SK-N-SH (cell line): ENCODE measurements at regions of chr20 and their contacts with region 1.

Region 1: DNA sequence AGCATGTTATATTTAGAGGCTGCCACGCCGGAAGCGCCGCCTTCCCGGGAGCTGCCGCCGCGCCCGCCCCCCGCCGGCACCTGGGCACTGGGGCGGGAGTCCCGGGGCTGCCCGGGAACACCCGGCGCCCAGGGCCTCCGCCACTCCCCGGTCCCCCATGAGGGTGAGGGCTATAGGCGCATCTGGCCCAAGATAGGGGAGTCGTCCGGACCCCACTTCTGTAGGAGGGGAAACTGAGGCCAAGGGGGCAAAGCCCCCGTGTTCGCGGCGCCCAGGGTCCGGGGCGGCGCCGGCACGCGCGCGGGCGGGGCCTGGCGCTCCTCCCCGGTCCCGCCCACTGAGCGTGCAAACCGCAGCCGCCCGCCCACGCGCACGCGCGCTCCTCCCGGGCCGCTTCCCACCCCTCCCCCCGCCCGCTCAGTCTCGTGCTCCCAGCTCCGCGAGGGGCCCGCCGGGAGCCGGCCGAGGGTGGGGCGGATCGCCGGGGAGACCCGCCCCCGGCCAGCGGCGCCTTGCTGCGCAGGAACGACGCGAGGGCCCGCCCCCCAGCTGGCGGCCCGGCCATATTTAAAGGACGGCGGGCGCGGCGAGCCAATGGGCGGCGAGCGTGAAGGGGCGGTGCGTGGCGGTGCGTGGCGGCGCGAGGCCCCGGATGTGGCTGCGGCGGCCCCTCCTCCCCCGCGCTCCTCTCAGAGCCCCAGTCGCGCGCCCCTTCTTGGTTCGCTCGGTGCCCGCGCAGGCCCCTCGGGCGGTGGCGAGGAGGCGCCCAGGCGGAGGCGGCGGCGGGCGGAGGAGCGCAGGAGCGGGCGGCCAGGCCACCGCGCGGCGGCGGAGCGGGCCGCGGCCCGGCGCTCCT is at the start of gene LSM14B:
- DNase-seq: peak; percentile 99
- H3K4me3 ChIP-seq: peak within 1 kb of the TSS; percentile 78 to 82
- H3K27ac ChIP-seq: peak within 1 kb of the TSS; percentile 85 to 87
- H3K4me1 ChIP-seq: peaks cover 9 to 28% of the 10 kb centered on the region in 2 experiments; a peak in 3 of 4 replicates
- H3K27me3 ChIP-seq: no peaks in the 10 kb centered on the region
- CTCF ChIP-seq: no peak
- EP300 ChIP-seq: no peak
- RAD21 ChIP-seq: no peak
- polyA plus RNA-seq, gene LSM14B: 52.2 and 64.6 TPM in 2 replicates

Region 2: DNA sequence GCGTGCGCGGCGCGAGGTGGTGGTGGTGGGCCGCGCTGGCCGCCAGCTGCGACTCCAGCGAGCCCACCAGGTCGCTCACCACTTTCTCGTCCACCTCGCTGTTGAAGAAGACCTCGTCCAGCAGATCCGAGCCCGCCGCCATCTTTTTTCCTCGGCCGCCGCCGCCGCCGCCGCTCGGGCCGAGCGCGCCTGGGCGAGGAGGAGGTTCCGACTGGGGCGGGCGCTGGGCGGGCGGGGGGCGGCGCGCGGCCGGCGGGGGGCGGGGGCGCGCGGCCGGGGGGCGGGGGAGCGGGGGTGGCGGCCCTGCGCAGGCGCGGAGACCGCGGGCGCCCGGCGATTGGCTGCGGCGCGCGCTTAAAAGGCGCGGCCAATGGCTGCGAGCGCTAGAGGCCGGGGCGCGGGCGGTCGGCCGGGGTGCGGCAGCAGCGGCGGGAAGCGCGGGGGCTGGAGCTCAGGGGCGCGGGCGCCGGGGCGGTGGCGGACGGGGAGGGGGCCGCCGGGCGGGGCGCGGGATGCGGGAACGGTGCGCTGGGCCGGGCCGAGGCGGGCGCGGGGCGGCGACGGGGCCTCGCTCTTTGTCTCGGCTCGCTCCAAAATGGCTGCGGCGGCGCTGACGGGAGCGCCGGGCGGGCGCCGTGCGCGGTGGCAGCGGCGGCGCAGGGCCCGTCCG is 56.2 kb before region 1 on chr20 and contains the start of gene TAF4:
- CTCF ChIA-PET with region 1: interaction called, 3 read pairs
- POLR2A ChIA-PET with region 1: interaction called, 41 read pairs
- DNase-seq: peak; percentile 100
- H3K4me3 ChIP-seq: peak within 1 kb of the TSS; percentile 70 to 77
- H3K27ac ChIP-seq: peak within 1 kb of the TSS; percentile 58 to 88; a peak in 3 of 4 replicates
- H3K4me1 ChIP-seq: peaks cover 20 to 30% of the 10 kb centered on the region in 2 experiments; a peak in 3 of 4 replicates
- H3K27me3 ChIP-seq: no peaks in the 10 kb centered on the region
- CTCF ChIP-seq: no peak
- EP300 ChIP-seq: peak in 1 of 2 experiments; percentile 15; a peak in 1 of 4 replicates
- RAD21 ChIP-seq: no peak
- polyA plus RNA-seq, gene TAF4: 2.9 and 4.8 TPM in 2 replicates

Region 3: DNA sequence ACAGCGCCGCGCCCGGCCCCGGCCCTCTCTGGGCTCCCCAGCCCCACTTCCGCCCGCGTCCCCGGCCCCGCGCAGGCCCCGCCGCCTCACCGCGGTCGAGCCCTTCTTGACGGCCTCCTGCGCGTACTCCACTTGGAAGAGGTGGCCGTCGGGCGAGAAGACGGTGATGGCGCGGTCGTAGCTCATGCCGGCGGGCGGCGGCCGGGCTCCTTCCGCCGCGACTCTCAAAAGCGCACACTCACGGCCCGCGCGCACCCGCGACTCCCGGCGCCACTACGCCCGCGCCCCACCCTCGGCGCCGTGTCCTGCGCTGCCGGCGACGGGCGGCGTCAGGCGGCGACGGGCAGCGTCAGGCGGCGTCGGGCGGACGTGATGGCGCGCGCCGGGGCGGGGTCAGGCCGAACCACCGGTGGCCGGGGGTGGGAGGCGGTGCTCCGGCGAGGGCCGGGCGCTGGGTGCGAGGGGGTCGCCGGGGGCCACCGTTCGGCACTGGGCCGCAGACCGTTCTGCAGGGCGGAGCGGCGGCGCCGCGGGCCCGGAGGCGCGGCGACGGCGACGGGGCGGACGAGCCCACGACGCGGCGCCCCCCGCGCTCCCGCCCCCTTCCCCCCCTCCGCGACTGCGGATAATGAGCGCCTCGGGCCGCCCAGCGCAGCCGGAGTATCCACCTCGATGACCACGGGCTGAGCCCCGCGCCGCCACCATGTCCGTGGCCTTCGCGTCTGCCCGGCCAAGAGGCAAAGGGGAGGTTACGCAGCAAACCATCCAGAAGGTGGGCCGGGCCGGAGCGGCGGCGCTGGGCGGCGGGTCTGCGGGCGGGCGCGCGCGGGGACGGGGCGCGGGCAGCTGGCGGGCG is 21.3 kb after region 1 on chr20 and contains the starts of genes PSMA7 and SS18L1:
- CTCF ChIA-PET with region 1: interaction called, 18 read pairs
- POLR2A ChIA-PET with region 1: interaction called, 4 read pairs
- DNase-seq: peak; percentile 97
- H3K4me3 ChIP-seq: peak within 1 kb of the TSS; percentile 88 to 92
- H3K27ac ChIP-seq: peak within 1 kb of the TSS; percentile 34 to 96; a peak in 3 of 4 replicates
- H3K4me1 ChIP-seq: peaks cover 5 to 27% of the 10 kb centered on the region in 2 experiments; a peak in 3 of 4 replicates
- H3K27me3 ChIP-seq: no peaks in the 10 kb centered on the region
- CTCF ChIP-seq: no peak
- EP300 ChIP-seq: no peak
- RAD21 ChIP-seq: no peak
- polyA plus RNA-seq, gene PSMA7: 687 and 801 TPM in 2 replicates
- polyA plus RNA-seq, gene SS18L1: 10.7 and 13.1 TPM in 2 replicates

Region 4: DNA sequence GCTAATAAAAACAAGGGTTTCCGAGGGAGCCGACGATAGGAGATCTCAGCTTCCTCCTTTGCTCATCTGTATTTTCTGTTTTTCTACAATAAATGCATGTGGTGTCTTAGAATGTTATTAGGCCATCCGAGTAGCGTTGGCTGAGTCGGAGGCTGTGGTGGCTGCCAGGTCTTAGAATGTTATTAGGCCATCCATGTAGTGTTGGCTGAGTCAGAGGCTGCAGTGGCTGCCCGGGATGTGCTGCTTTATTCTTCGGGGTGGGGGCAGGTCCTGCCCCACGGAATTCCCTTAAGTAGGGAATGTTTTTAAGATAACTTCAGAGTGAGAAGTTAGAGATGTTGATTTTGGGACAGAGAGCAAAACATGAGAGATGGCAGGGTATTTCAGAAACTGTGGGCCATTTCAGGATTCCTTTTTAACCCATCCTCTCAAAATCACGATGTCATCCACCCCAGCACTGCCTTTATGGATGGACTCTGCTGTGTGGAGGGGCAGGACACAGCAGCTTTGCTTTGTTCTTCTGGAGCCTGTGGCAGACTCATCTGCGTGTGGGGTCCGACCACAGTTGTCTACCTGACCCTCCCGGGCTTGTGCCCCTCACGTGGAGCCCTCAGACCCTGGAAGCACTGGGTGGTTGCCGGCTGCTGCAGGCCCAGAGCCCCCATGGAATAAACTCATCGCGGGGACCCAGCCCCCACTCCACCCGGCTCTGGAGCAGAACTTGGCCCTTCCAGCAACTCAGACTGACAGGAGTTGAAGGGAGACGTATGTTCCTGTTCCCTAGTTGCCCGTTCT is 136.7 kb after region 1 on chr20:
- CTCF ChIA-PET with region 1: no interaction called
- POLR2A ChIA-PET with region 1: no interaction called
- DNase-seq: no peak
- H3K4me3 ChIP-seq: no peak overlapping the region
- H3K27ac ChIP-seq: peak overlapping the region in 1 of 2 experiments; percentile 29; a peak in 1 of 4 replicates
- H3K4me1 ChIP-seq: no peaks in the 10 kb centered on the region
- H3K27me3 ChIP-seq: no peaks in the 10 kb centered on the region
- CTCF ChIP-seq: no peak
- EP300 ChIP-seq: no peak
- RAD21 ChIP-seq: no peak